ENCODE measurements at regions of chr15 and their contacts with region 1.

Region 1: DNA sequence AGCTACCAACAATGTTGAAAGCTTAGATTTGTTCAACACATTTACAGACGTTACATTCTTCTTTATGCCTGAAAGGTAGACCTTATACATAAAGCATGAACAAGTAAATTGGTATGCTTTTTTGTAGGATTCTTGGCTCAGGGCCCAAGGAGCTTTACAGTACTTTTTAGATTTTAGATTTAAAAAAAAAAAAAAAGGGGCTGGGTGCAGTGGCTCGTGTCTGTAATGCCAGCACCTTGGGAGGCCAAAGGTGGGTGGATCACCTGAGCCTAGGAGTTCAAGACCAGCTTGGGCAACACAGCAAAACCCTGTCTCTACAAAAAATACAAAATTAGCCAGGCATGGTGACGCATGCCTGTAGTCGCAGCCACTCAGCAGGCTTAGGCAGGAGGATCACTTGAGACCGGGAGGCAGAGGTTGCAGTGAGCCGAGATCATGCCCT is 39.7 kb downstream of the MEF2A start:
- DNase-seq: no peak
- ATAC-seq: no peak
- H3K4me3 ChIP-seq: no peak overlapping the region
- H3K4me3 Mint-ChIP-seq: no peak overlapping the region
- H3K27ac ChIP-seq: no peak overlapping the region
- H3K27ac Mint-ChIP-seq: no peak overlapping the region
- H3K4me1 ChIP-seq: peaks cover 0 to 9% of the 10 kb centered on the region in 2 experiments
- H3K4me1 Mint-ChIP-seq: peaks cover 66 to 69% (median 69%) of the 10 kb centered on the region in 3 donors
- H3K27me3 ChIP-seq: no peaks in the 10 kb centered on the region
- H3K27me3 Mint-ChIP-seq: no peaks in the 10 kb centered on the region

Region 2: GRCh38 chr15:99343881-99344551 is 261.5 kb before region 1 on chr15:
- CTCF ChIA-PET with region 1: interaction called in 1 of 2 experiments, 10 read pairs
- POLR2A ChIA-PET with region 1: no interaction called
- DNase-seq: peak in 34 of 35 experiments; percentile 12 to 65 (median 44)
- ATAC-seq: peak; percentile 78 to 92 (median 83)
- H3K4me3 ChIP-seq: no peak overlapping the region
- H3K4me3 Mint-ChIP-seq: no peak overlapping the region
- H3K27ac ChIP-seq: no peak overlapping the region
- H3K27ac Mint-ChIP-seq: no peak overlapping the region
- H3K4me1 ChIP-seq: no peaks in the 10 kb centered on the region
- H3K4me1 Mint-ChIP-seq: peaks cover 4 to 10% (median 7%) of the 10 kb centered on the region in 3 donors
- H3K27me3 ChIP-seq: no peaks in the 10 kb centered on the region
- H3K27me3 Mint-ChIP-seq: no peaks in the 10 kb centered on the region

Region 3: DNA sequence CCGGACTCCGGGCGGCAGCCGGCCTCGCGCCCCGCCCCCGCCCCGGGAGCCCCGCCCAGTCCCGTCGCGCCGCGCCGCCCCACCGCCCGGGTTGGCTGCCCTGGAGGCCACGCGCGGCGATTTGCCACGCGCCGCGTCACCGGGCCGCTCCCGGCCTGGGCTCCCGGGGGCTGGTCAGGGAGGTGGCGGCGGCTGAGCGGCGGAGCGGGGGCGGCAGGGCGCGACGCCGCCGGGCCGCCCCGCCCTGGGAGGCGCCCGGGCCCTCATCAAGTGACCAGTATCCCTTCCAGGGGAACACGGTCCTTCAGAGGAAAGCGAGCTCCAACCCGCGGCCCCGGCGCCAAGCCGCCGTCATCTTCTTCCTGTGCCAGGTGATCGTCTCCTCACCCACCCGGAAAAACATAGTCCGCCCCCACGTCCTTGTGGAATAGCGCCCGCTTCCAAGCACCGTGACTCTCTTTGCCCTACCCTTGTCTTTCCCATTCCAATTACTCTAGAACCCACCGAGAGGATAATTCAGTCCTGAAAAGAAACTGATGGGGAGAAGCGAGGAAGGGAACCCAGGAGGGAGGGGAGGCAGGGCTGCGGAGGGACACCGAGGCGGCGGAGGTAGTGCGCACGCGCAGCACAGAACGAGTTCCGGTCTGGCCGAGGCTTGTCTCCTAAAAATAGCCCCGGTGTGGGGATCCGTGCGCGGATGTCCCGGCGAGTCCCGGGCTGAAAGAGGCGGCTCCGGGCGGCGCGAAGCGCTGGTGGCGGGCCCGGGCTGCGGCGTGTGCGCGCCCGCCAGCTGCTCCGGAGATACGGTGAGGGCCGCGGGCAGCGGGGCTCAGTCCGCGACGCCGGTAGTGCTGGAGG is 40.0 kb before region 1 on chr15 and contains the start of gene MEF2A:
- CTCF ChIA-PET with region 1: no interaction called
- POLR2A ChIA-PET with region 1: no interaction called
- DNase-seq: peak; percentile 77 to 95 (median 86)
- ATAC-seq: peak; percentile 81 to 82 (median 82)
- H3K4me3 ChIP-seq: peak within 1 kb of the TSS; percentile 97 to 99
- H3K4me3 Mint-ChIP-seq: peak within 1 kb of the TSS; percentile 97 to 99 (median 98)
- H3K27ac ChIP-seq: peak within 1 kb of the TSS; percentile 94
- H3K27ac Mint-ChIP-seq: peak within 1 kb of the TSS; percentile 95 to 96
- H3K4me1 ChIP-seq: peaks cover 19 to 22% of the 10 kb centered on the region in 2 experiments
- H3K4me1 Mint-ChIP-seq: peaks cover 49 to 58% (median 50%) of the 10 kb centered on the region in 3 donors
- H3K27me3 ChIP-seq: no peaks in the 10 kb centered on the region
- H3K27me3 Mint-ChIP-seq: no peaks in the 10 kb centered on the region
- total RNA-seq, gene MEF2A: 31.6 to 37.4 (median 33.9) TPM